IMR-90 (cell line): ENCODE measurements at regions of chr11 and their contacts with region 1.

Region 1: DNA sequence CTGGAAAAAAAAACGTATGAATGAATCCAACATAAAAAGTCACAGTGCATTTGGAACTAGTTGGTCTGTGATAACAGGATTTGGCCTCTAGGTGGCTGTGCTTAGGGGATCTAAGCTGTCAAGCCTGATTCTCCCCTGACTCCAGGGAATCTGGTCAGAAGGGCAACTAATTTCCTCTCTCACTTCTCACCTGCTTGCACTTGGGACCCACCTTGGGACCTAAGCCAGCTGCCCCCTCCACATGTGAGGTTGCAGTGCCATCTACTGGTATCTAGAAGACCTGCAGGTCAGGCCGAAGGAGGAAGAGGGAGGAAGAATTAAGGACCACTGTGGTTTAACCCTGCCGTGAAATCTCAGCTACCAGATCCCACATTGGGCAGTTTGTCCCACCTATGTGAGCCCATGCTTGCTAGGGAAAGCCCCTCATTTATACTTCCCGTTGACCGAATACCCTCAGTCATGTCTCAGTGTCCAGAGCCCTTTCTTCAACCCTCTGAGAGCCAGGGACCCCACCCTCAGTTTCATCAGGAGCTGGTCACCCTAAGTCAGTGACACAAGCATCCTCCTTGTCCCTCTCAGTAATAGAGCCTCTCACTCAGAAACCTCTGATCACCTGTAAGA is 33.2 kb upstream of the CAVIN3 start:
- DNase-seq: peak; percentile 40
- ATAC-seq: peak; percentile 54
- H3K4me3 ChIP-seq: no peak overlapping the region
- H3K27ac ChIP-seq: no peak overlapping the region
- H3K4me1 ChIP-seq: peaks cover 11% of the 10 kb centered on the region
- H3K27me3 ChIP-seq: no peaks in the 10 kb centered on the region
- CTCF ChIP-seq: peak; percentile 94
- POLR2A ChIP-seq: 0 out of 2 replicates have a peak, but pooled peaks have one; percentile 27
- RAD21 ChIP-seq: peak; percentile 96

Region 2: DNA sequence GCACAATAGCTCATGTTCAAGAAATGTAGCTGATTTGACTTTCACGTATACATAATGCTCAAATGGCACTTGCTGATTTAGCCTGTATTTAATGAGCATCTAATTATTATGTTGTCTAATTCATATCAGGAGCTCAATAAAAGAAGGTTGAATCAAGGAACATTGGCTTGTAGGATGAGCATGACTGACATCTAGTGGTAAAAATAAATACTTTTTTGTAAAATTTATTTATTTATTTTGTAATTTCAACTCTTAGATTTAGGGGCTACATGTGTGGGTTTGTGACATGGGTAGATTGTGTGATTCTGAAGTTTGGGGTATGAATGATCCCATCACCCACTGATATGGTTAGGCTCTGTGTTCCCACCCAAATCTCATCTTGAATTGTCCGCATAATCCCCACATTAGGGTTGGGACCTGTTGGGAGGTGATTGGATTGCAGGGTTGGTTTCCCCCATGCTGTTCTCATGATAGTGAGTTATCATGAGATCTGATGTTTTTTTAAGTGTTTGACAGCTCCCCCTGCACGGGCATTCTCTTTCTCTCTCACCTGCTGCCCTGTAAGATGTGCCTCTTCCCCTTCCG is 462.2 kb before region 1 on chr11:
- CTCF ChIA-PET with region 1: no interaction called
- POLR2A ChIA-PET with region 1: no interaction called
- dilution Hi-C with region 1: no loop called
- in situ Hi-C with region 1: no loop called
- intact Hi-C with region 1: loop called (anchors 2 kb)
- DNase-seq: peak; percentile 6
- ATAC-seq: no peak
- H3K4me3 ChIP-seq: no peak overlapping the region
- H3K27ac ChIP-seq: no peak overlapping the region
- H3K4me1 ChIP-seq: no peaks in the 10 kb centered on the region
- H3K27me3 ChIP-seq: no peaks in the 10 kb centered on the region
- CTCF ChIP-seq: peak; percentile 44
- POLR2A ChIP-seq: no peak
- RAD21 ChIP-seq: peak; percentile 33; the same call in 1 of the 2 replicates

Region 3: DNA sequence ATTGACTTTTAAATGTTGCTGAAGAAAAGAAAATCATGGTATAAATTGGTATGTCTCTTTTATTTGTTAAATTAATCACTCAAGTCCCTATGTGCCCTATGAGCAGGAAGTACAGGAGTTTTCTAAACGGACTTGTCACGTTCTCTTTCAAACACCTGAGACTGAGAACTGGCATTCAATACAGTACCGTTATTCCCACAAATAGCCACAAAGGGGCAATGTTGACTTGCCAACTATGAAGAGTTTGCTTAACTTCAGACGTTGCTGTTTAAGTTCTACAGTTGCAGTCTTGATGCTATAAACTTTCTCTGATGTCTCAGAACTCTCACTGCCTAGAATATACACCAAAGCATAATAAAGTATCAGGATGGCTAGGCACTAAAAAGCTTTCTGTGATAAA is 330.5 kb before region 1 on chr11:
- CTCF ChIA-PET with region 1: interaction called, 4 read pairs
- POLR2A ChIA-PET with region 1: no interaction called
- dilution Hi-C with region 1: no loop called
- in situ Hi-C with region 1: loop called (anchors 10 kb)
- intact Hi-C with region 1: loop called (anchors 1 kb)
- DNase-seq: peak; percentile 43
- ATAC-seq: peak; percentile 56
- H3K4me3 ChIP-seq: no peak overlapping the region
- H3K27ac ChIP-seq: no peak overlapping the region
- H3K4me1 ChIP-seq: no peaks in the 10 kb centered on the region
- H3K27me3 ChIP-seq: no peaks in the 10 kb centered on the region
- CTCF ChIP-seq: peak; percentile 58
- POLR2A ChIP-seq: no peak
- RAD21 ChIP-seq: peak; percentile 67

Region 4: GRCh38 chr11:6142936-6143335 is 210.5 kb before region 1 on chr11:
- CTCF ChIA-PET with region 1: no interaction called
- POLR2A ChIA-PET with region 1: no interaction called
- dilution Hi-C with region 1: no loop called
- in situ Hi-C with region 1: no loop called
- intact Hi-C with region 1: no loop called
- DNase-seq: no peak
- ATAC-seq: no peak
- H3K4me3 ChIP-seq: no peak overlapping the region
- H3K27ac ChIP-seq: no peak overlapping the region
- H3K4me1 ChIP-seq: no peaks in the 10 kb centered on the region
- H3K27me3 ChIP-seq: no peaks in the 10 kb centered on the region
- CTCF ChIP-seq: no peak
- POLR2A ChIP-seq: no peak
- RAD21 ChIP-seq: no peak

Region 5: GRCh38 chr11:6210274-6210955 is 143.1 kb before region 1 on chr11:
- CTCF ChIA-PET with region 1: no interaction called
- POLR2A ChIA-PET with region 1: no interaction called
- dilution Hi-C with region 1: no loop called
- in situ Hi-C with region 1: no loop called
- intact Hi-C with region 1: no loop called
- DNase-seq: peak; percentile 24
- ATAC-seq: peak; percentile 93
- H3K4me3 ChIP-seq: no peak overlapping the region
- H3K27ac ChIP-seq: no peak overlapping the region
- H3K4me1 ChIP-seq: peaks cover 10% of the 10 kb centered on the region; the same call in 1 of the 2 replicates
- H3K27me3 ChIP-seq: no peaks in the 10 kb centered on the region
- CTCF ChIP-seq: no peak
- POLR2A ChIP-seq: no peak
- RAD21 ChIP-seq: no peak

Region 6: GRCh38 chr11:6251120-6251733 is 102.2 kb before region 1 on chr11:
- CTCF ChIA-PET with region 1: interaction called, 49 read pairs
- POLR2A ChIA-PET with region 1: no interaction called
- dilution Hi-C with region 1: no loop called
- in situ Hi-C with region 1: loop called (anchors 5 kb)
- intact Hi-C with region 1: loop called (anchors 1 kb)
- DNase-seq: peak; percentile 75
- ATAC-seq: peak; percentile 89
- H3K4me3 ChIP-seq: no peak overlapping the region
- H3K27ac ChIP-seq: no peak overlapping the region
- H3K4me1 ChIP-seq: peaks cover 11% of the 10 kb centered on the region
- H3K27me3 ChIP-seq: peaks cover 9% of the 10 kb centered on the region
- CTCF ChIP-seq: peak; percentile 91
- POLR2A ChIP-seq: no peak
- RAD21 ChIP-seq: peak; percentile 74

Region 7: GRCh38 chr11:6298605-6299004 is 54.9 kb before region 1 on chr11:
- CTCF ChIA-PET with region 1: interaction called, 6 read pairs
- POLR2A ChIA-PET with region 1: no interaction called
- dilution Hi-C with region 1: no loop called
- in situ Hi-C with region 1: no loop called
- intact Hi-C with region 1: loop called (anchors 1 kb)
- DNase-seq: no peak
- ATAC-seq: peak; percentile 80
- H3K4me3 ChIP-seq: no peak overlapping the region
- H3K27ac ChIP-seq: no peak overlapping the region
- H3K4me1 ChIP-seq: peaks cover 1% of the 10 kb centered on the region; the same call in 1 of the 2 replicates
- H3K27me3 ChIP-seq: peaks cover 2% of the 10 kb centered on the region; the same call in 1 of the 2 replicates
- CTCF ChIP-seq: peak; percentile 67
- POLR2A ChIP-seq: no peak
- RAD21 ChIP-seq: peak; percentile 43

Region 8: GRCh38 chr11:6315811-6316425 is 37.6 kb before region 1 on chr11:
- CTCF ChIA-PET with region 1: interaction called, 14 read pairs
- POLR2A ChIA-PET with region 1: interaction called, 3 read pairs
- dilution Hi-C with region 1: no loop called
- in situ Hi-C with region 1: no loop called
- intact Hi-C with region 1: loop called (anchors 2 kb)
- DNase-seq: peak; percentile 65
- ATAC-seq: peak; percentile 32
- H3K4me3 ChIP-seq: no peak overlapping the region
- H3K27ac ChIP-seq: no peak overlapping the region
- H3K4me1 ChIP-seq: peaks cover 7% of the 10 kb centered on the region
- H3K27me3 ChIP-seq: no peaks in the 10 kb centered on the region
- CTCF ChIP-seq: peak; percentile 84
- POLR2A ChIP-seq: peak; percentile 30; the same call in 1 of the 2 replicates
- RAD21 ChIP-seq: peak; percentile 85

Region 9: DNA sequence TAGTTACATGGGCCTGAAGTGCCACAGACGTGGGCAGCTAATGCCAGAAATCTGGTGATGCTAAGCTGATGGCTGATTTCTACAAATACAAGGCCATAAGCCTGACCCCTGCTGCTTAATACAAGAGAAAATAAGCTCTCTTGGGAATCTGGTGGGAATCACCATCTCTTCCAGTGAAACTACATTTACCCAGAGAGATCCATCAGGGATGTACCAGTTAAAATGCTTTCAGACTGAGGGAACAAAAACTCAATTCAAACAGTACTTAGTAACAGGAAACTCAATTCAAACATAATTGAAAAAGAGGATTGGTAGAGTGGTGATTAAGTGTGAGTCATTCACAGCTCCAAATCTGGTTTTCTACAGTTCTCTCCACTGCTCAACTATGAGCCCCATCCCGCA is 31.5 kb before region 1 on chr11:
- CTCF ChIA-PET with region 1: interaction called, 18 read pairs
- POLR2A ChIA-PET with region 1: interaction called, 6 read pairs
- dilution Hi-C with region 1: no loop called
- in situ Hi-C with region 1: no loop called
- intact Hi-C with region 1: loop called (anchors 2 kb)
- DNase-seq: peak; percentile 82
- ATAC-seq: peak; percentile 2; the same call in 1 of the 2 replicates
- H3K4me3 ChIP-seq: no peak overlapping the region
- H3K27ac ChIP-seq: peak overlapping the region; percentile 80
- H3K4me1 ChIP-seq: peaks cover 15% of the 10 kb centered on the region
- H3K27me3 ChIP-seq: no peaks in the 10 kb centered on the region
- CTCF ChIP-seq: no peak
- POLR2A ChIP-seq: no peak
- RAD21 ChIP-seq: no peak